Endothelial cell of umbilical vein (primary cell): ENCODE measurements at regions of chr1 and their contacts with region 1.

Region 1: GRCh38 chr1:197399755-197400527 is 131.9 kb downstream of the CRB1 start:
- DNase-seq: peak; percentile 60
- H3K4me3 ChIP-seq: no peak overlapping the region
- H3K27ac ChIP-seq: no peak overlapping the region
- H3K4me1 ChIP-seq: no peaks in the 10 kb centered on the region
- H3K27me3 ChIP-seq: no peaks in the 10 kb centered on the region
- CTCF ChIP-seq: peak; percentile 50 to 55
- POLR2A ChIP-seq: no peak

Region 2: GRCh38 chr1:196960854-196961253 is 439.1 kb before region 1 on chr1:
- CTCF ChIA-PET with region 1: no interaction called
- POLR2A ChIA-PET with region 1: no interaction called
- dilution Hi-C with region 1: no loop called
- intact Hi-C with region 1: no loop called
- DNase-seq: no peak
- H3K4me3 ChIP-seq: no peak overlapping the region
- H3K27ac ChIP-seq: no peak overlapping the region
- H3K4me1 ChIP-seq: no peaks in the 10 kb centered on the region
- H3K27me3 ChIP-seq: no peaks in the 10 kb centered on the region
- CTCF ChIP-seq: no peak
- POLR2A ChIP-seq: no peak

Region 3: GRCh38 chr1:197146197-197146889 is 253.6 kb before region 1 on chr1 and contains the start of gene ASPM:
- CTCF ChIA-PET with region 1: no interaction called
- POLR2A ChIA-PET with region 1: no interaction called
- dilution Hi-C with region 1: no loop called
- intact Hi-C with region 1: no loop called
- DNase-seq: peak; percentile 96
- H3K4me3 ChIP-seq: peak within 1 kb of the TSS; percentile 63 to 88 (median 80)
- H3K27ac ChIP-seq: peak within 1 kb of the TSS; percentile 50
- H3K4me1 ChIP-seq: peaks cover 12% of the 10 kb centered on the region
- H3K27me3 ChIP-seq: no peaks in the 10 kb centered on the region
- CTCF ChIP-seq: no peak
- POLR2A ChIP-seq: peak; percentile 4
- total RNA-seq, gene ASPM: 44.6 and 55.1 TPM in 2 replicates

Region 4: GRCh38 chr1:197268012-197268411 is 131.9 kb before region 1 on chr1 and contains the start of gene CRB1:
- CTCF ChIA-PET with region 1: no interaction called
- POLR2A ChIA-PET with region 1: no interaction called
- dilution Hi-C with region 1: no loop called
- intact Hi-C with region 1: no loop called
- DNase-seq: no peak
- H3K4me3 ChIP-seq: no peak within 1 kb of the TSS
- H3K27ac ChIP-seq: no peak within 1 kb of the TSS
- H3K4me1 ChIP-seq: no peaks in the 10 kb centered on the region
- H3K27me3 ChIP-seq: peaks cover 0 to 6% of the 10 kb centered on the region in 2 experiments
- CTCF ChIP-seq: no peak
- POLR2A ChIP-seq: no peak
- total RNA-seq, gene CRB1: not detected in 2 replicates

Region 5: GRCh38 chr1:197327776-197328364 is 72.1 kb before region 1 on chr1:
- CTCF ChIA-PET with region 1: no interaction called
- POLR2A ChIA-PET with region 1: no interaction called
- dilution Hi-C with region 1: no loop called
- intact Hi-C with region 1: no loop called
- DNase-seq: peak; percentile 21
- H3K4me3 ChIP-seq: no peak overlapping the region
- H3K27ac ChIP-seq: no peak overlapping the region
- H3K4me1 ChIP-seq: no peaks in the 10 kb centered on the region
- H3K27me3 ChIP-seq: peaks cover 0 to 2% of the 10 kb centered on the region in 2 experiments
- CTCF ChIP-seq: peak; percentile 28 to 44
- POLR2A ChIP-seq: no peak

Region 6: GRCh38 chr1:197384471-197384870 is 15.5 kb before region 1 on chr1:
- CTCF ChIA-PET with region 1: interaction called, 34 read pairs
- POLR2A ChIA-PET with region 1: no interaction called
- dilution Hi-C with region 1: no loop called
- intact Hi-C with region 1: no loop called
- DNase-seq: no peak
- H3K4me3 ChIP-seq: no peak overlapping the region
- H3K27ac ChIP-seq: no peak overlapping the region
- H3K4me1 ChIP-seq: no peaks in the 10 kb centered on the region
- H3K27me3 ChIP-seq: no peaks in the 10 kb centered on the region
- CTCF ChIP-seq: no peak
- POLR2A ChIP-seq: no peak

Region 7: DNA sequence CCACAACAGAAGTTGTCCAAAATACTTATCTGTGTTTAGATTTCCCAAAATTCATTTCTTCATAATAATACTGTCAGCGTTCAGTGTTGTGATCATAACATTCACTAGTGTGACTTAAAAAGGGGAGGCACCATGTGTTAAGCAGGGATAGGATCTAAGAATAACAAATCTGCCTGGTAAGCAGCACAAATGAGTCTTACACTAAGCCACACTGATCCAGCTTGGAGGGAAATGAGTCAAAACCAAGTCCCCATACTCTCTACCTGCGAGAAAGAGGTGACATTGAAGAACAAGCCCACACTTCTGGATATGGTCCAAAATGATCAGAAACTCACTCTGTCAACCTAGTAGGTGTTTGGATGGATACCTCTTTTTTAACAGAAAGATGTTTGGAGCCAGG is 13.6 kb after region 1 on chr1:
- CTCF ChIA-PET with region 1: interaction called, 15 read pairs
- POLR2A ChIA-PET with region 1: no interaction called
- dilution Hi-C with region 1: no loop called
- intact Hi-C with region 1: no loop called
- DNase-seq: no peak
- H3K4me3 ChIP-seq: no peak overlapping the region
- H3K27ac ChIP-seq: no peak overlapping the region
- H3K4me1 ChIP-seq: no peaks in the 10 kb centered on the region
- H3K27me3 ChIP-seq: peaks cover 0 to 2% of the 10 kb centered on the region in 2 experiments
- CTCF ChIP-seq: no peak
- POLR2A ChIP-seq: no peak

Region 8: GRCh38 chr1:197438010-197438790 is 38.3 kb after region 1 on chr1:
- CTCF ChIA-PET with region 1: interaction called, 15 read pairs
- POLR2A ChIA-PET with region 1: no interaction called
- dilution Hi-C with region 1: no loop called
- intact Hi-C with region 1: no loop called
- DNase-seq: no peak
- H3K4me3 ChIP-seq: no peak overlapping the region
- H3K27ac ChIP-seq: no peak overlapping the region
- H3K4me1 ChIP-seq: no peaks in the 10 kb centered on the region
- H3K27me3 ChIP-seq: no peaks in the 10 kb centered on the region
- CTCF ChIP-seq: no peak
- POLR2A ChIP-seq: no peak

Region 9: GRCh38 chr1:197521118-197521739 is 121.3 kb after region 1 on chr1:
- CTCF ChIA-PET with region 1: interaction called, 12 read pairs
- POLR2A ChIA-PET with region 1: no interaction called
- dilution Hi-C with region 1: no loop called
- intact Hi-C with region 1: no loop called
- DNase-seq: peak; percentile 46
- H3K4me3 ChIP-seq: no peak overlapping the region
- H3K27ac ChIP-seq: no peak overlapping the region
- H3K4me1 ChIP-seq: no peaks in the 10 kb centered on the region
- H3K27me3 ChIP-seq: no peaks in the 10 kb centered on the region
- CTCF ChIP-seq: peak; percentile 39 to 51
- POLR2A ChIP-seq: no peak

Region 10: DNA sequence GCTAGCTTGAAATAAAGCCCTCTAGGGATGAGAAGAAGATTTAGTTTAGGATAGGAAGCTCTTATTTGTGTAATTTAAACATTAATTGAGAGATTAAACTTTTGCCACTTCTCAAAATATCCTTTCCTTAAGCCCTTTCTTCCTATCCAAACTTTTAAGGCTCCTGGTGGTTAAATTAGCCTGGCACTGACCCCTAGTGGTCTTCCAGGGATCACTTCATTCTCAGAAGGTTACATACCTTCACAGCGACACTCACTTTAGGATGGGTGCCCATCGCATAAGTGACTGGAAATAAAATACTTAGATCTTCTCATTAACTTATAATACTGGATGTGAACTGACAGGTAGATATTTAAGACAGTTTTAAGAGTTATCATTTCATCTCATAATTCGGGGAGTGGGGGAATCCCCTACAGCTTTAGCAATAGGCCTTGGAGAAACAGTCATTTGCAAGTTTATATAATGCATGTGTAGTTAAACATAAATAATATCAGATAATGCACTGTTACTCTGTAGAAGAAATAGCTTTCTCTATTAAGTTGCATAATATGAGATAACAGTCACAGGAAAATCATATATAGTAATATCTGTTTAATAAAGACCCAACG is 524.7 kb after region 1 on chr1:
- CTCF ChIA-PET with region 1: interaction called, 4 read pairs
- POLR2A ChIA-PET with region 1: no interaction called
- dilution Hi-C with region 1: no loop called
- intact Hi-C with region 1: loop called (anchors 2 kb)
- DNase-seq: peak; percentile 58
- H3K4me3 ChIP-seq: no peak overlapping the region
- H3K27ac ChIP-seq: no peak overlapping the region
- H3K4me1 ChIP-seq: peaks cover 3% of the 10 kb centered on the region
- H3K27me3 ChIP-seq: peaks cover 27 to 33% of the 10 kb centered on the region in 2 experiments
- CTCF ChIP-seq: peak; percentile 60 to 63
- POLR2A ChIP-seq: no peak